ENCODE measurements at regions of chr10 and their contacts with region 1.

Region 1: GRCh38 chr10:104353325-104354048 is at the start of gene CFAP58:
- DNase-seq: no peak
- H3K4me3 ChIP-seq: peak within 1 kb of the TSS; percentile 47
- H3K27me3 ChIP-seq: no peaks in the 10 kb centered on the region
- CTCF ChIP-seq: peak; percentile 82
- polyA plus RNA-seq, gene CFAP58: 0.23 and 0.37 TPM in 2 replicates

Region 2: GRCh38 chr10:104281694-104282093 is 71.8 kb before region 1 on chr10:
- CTCF ChIA-PET with region 1: interaction called, 259 read pairs
- POLR2A ChIA-PET with region 1: no interaction called
- DNase-seq: no peak
- H3K4me3 ChIP-seq: no peak overlapping the region
- H3K27me3 ChIP-seq: no peaks in the 10 kb centered on the region
- CTCF ChIP-seq: no peak

Region 3: GRCh38 chr10:104317195-104317767 is 36.2 kb before region 1 on chr10:
- CTCF ChIA-PET with region 1: interaction called, 30 read pairs
- POLR2A ChIA-PET with region 1: no interaction called
- DNase-seq: peak; percentile 77
- H3K4me3 ChIP-seq: no peak overlapping the region
- H3K27me3 ChIP-seq: no peaks in the 10 kb centered on the region
- CTCF ChIP-seq: no peak

Region 4: DNA sequence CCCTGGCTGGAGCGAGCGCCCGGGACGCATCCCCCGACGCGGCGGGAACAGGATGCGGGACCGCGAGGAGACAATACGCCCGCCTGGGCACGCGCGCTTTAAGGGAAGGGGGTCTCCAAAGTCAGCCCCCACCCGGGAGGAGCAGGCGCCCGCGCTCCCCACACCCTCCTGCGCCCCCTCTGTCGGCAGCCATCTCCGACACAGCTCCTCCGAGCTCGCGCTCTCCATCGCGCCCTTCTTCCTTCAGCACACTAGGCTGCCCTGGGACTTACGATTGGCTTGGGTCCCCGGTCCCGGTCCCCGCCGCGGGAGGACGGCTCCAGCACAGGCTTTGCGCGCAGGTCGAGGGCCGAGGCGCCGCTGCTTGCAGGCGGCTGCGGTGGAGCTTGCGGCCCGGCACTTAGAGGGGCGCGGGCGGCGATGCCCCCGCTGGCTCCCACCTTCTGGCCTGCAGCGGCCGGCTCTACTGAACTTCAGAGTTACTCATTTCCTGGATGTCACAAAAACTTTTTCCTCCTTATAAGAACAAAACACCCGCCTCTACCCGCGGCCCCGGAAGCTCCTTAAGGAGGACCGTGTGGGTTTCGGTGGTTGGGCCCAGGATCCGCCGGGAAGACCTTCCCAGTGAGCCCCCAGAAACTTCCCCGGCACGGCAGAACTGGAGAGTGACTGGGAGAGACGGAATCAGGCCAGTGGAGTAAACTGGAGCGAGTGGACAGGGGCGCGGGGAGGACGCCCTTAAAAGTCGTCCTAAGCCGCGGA is 15.3 kb before region 1 on chr10 and contains the start of gene ITPRIP:
- CTCF ChIA-PET with region 1: interaction called, 12 read pairs
- POLR2A ChIA-PET with region 1: no interaction called
- DNase-seq: peak; percentile 56
- H3K4me3 ChIP-seq: peak within 1 kb of the TSS; percentile 87
- H3K27me3 ChIP-seq: no peaks in the 10 kb centered on the region
- CTCF ChIP-seq: peak; percentile 30
- polyA plus RNA-seq, gene ITPRIP: 24.4 and 33.6 TPM in 2 replicates

Measured in BJ (cell line).